Right cardiac atrium (tissue), 5 donors: ENCODE measurements at regions of chr2 and their contacts with region 1.

Region 1: GRCh38 chr2:102235491-102235890 is 48.7 kb downstream of the IL1RL2 start:
- DNase-seq: no peak
- ATAC-seq: peak in 1 of 2 donors; percentile 28
- H3K4me3 ChIP-seq: no peak overlapping the region
- H3K27ac ChIP-seq: no peak overlapping the region
- H3K4me1 ChIP-seq: no peaks in the 10 kb centered on the region
- H3K27me3 ChIP-seq: no peaks in the 10 kb centered on the region

Region 2: DNA sequence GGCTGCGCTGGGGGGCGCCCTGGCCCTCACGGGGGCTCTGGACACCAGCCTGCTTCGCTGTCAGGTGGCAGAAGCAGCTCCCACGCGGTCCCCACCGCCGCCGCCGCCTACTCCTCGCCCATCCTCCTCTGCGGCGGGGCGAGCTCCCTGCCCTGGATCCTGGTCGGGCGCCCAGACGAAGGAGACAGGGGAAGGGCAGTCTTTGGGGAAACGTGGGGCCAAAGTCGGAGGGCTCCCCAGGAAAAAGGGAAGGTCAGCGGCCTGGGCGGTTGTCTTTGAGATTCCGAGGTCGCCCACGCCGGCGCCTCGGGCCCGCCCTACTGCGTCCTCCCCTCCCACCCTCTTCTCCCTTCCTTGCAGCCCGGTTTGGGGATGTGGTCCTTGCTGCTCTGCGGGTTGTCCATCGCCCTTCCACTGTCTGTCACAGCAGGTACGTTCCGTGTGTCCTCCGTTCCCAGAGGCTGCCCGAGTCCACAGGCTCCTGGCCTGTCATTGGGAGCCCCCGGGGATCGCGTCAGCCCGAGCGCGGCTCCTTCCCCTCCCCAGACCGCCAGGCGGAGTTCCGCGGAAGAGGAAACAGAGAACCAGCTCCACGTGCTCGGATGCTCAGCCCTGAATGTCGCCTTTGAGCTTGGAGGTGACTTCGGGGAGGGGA is 47.9 kb before region 1 on chr2:
- intact Hi-C with region 1: loop called in 1 of 4 experiments (anchors 10 kb)
- DNase-seq: peak; percentile 65 to 87 (median 79)
- ATAC-seq: peak; percentile 88 to 89
- H3K4me3 ChIP-seq: peak overlapping the region; percentile 44
- H3K27ac ChIP-seq: peak overlapping the region; percentile 20
- H3K4me1 ChIP-seq: no peaks in the 10 kb centered on the region
- H3K27me3 ChIP-seq: no peaks in the 10 kb centered on the region